ENCODE measurements at regions of chr6 and their contacts with region 1.

Region 1: GRCh38 chr6:36969988-36970891 is 15.7 kb downstream of the PI16 start:
- DNase-seq: no peak
- ATAC-seq: peak in 1 of 8 donors; percentile 8
- H3K4me3 ChIP-seq: no peak overlapping the region
- H3K27ac ChIP-seq: peak overlapping the region in 8 of 10 donors; percentile 5 to 79 (median 58)
- H3K4me1 ChIP-seq: peaks cover 3 to 83% (median 61%) of the 10 kb centered on the region in 9 donors
- H3K27me3 ChIP-seq: no peaks in the 10 kb centered on the region
- CTCF ChIP-seq: no peak

Region 2: GRCh38 chr6:36839749-36840431 is 130.3 kb before region 1 on chr6:
- intact Hi-C with region 1: loop called in 1 of 10 experiments (anchors 5 kb)
- DNase-seq: peak; percentile 62 to 67
- ATAC-seq: peak; percentile 11 to 63 (median 50)
- H3K4me3 ChIP-seq: peak overlapping the region; percentile 24 to 71 (median 56)
- H3K27ac ChIP-seq: peak overlapping the region; percentile 71 to 90 (median 80)
- H3K4me1 ChIP-seq: peaks cover 2 to 59% (median 27%) of the 10 kb centered on the region in 9 donors
- H3K27me3 ChIP-seq: peaks cover 0 to 37% (median 0%) of the 10 kb centered on the region in 7 donors
- CTCF ChIP-seq: peak in 7 of 9 donors; percentile 21 to 62 (median 42)

Region 3: GRCh38 chr6:36929607-36930006 is 40.6 kb before region 1 on chr6:
- intact Hi-C with region 1: no loop called
- DNase-seq: no peak
- ATAC-seq: no peak
- H3K4me3 ChIP-seq: no peak overlapping the region
- H3K27ac ChIP-seq: peak overlapping the region in 5 of 10 donors; percentile 9 to 83 (median 51)
- H3K4me1 ChIP-seq: peaks cover 0 to 37% (median 20%) of the 10 kb centered on the region in 9 donors
- H3K27me3 ChIP-seq: no peaks in the 10 kb centered on the region
- CTCF ChIP-seq: no peak

Measured in heart right ventricle (tissue), 16 donors.